AG04449 (cell line): ENCODE measurements at regions of chr3 and their contacts with region 1.

Region 1: GRCh38 chr3:141441381-141442364 is 45.2 kb upstream of the RASA2 start:
- DNase-seq: peak; percentile 73
- H3K4me3 ChIP-seq: no peak overlapping the region
- CTCF ChIP-seq: peak; percentile 70

Region 2: DNA sequence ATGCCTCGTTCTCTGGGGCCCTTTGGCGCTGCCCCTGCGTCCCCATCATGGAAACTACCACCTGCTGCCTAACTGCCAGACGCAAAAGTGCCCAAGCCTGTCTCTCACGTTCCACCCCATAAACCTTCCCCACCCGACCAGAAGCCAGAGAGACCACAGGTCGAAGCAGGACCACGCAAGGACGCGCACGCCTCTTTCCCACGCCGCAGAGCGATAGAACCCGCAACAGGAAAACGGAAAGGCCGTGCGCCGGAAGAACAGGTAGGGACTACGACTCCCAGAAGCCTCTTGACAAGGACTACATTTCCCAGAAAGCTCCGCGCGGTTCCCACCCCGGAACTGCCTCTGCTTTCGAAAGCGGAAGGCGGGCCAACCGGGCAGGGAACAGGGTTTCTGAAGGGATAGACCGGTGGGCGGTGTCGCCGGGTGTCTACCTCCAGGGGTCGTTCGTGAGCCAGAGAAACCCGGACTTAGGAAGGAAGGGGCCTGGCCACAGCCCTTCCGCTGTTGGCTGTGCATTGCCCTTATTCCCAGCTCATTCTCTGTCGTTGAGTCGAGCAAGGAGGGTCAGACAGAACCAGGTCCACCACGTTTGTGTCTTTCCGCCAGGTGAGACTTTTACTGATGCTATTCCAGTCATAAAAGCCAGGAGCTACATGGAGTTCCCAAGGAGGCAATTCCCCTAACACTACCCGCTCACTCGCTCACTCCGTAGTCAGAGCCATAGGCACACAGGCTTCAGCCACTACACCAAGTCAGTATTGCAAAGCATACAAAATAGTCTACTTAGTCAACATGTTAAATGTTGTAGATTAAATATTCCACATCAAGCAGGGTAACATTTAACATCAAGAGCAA is 129.9 kb before region 1 on chr3:
- CTCF ChIA-PET with region 1: interaction called, 40 read pairs
- POLR2A ChIA-PET with region 1: interaction called, 3 read pairs
- DNase-seq: peak; percentile 88
- H3K4me3 ChIP-seq: peak overlapping the region; percentile 96
- CTCF ChIP-seq: peak; percentile 89

Region 3: DNA sequence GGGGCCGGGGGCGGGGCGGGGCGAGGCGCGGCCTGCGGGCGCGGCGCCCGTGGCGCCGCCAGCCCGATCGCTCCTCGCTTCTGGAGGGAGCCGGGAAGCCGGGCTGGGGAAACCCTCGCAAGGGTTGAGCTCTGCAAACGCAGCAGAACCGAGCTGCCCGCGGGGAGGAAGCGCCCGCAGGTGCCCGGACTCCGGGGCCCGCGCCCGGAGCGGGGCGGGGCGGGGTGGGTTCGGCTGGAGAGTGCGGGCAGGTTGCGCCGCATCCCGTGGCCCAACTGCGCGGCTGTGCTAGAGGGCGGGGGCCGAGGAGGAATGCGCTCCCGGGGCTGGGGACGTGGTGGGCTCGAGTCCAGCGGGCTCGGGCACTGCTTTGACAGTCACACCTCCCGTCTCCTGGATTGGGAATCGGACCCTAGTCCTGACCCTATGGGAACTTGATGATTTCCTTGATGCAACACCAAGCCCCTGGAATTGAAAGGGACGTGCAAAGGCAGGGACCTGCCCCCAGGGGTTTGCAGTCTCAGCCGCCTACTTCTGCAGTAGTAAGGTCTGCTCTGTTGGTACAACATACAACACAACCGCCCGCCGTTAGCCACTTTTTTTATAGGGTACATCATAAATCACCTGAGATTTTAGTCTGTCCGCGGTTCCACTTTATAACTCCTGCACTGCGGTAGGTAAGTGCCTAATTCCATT is 39.0 kb before region 1 on chr3:
- CTCF ChIA-PET with region 1: interaction called, 15 read pairs
- POLR2A ChIA-PET with region 1: no interaction called
- DNase-seq: no peak
- H3K4me3 ChIP-seq: peak overlapping the region; percentile 62
- CTCF ChIP-seq: no peak

Region 4: DNA sequence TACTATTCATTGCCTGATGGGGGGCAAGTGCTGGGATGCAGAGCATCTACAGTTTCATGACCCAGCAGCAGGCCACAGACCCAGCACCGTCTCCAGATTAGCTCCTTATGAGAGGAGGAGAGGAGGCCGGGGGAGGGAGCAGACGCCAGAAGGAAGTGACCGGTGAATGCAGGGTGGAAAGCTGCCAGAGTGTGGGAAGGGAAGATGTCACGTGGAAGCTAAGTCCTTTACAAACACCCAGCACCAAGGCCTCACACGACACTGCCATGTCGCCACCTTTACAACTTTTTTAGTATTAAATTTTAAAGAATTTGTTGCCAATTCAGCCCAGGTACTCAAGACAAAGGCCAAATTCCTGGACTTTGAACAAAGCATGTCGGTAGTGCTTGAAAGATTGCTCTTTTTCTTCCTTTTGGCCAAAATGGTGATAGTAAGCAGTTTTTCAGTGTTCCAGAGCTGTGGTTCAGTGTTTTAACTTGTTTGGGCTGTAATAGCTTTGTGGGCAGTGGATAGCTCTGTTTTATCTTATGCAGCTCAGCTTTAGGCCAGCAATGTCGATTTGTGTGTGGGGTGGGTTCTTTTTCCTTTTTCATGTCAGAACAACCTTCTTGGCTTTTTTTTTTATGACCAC is 15.2 kb before region 1 on chr3:
- CTCF ChIA-PET with region 1: interaction called, 161 read pairs
- POLR2A ChIA-PET with region 1: interaction called, 3 read pairs
- DNase-seq: no peak
- H3K4me3 ChIP-seq: no peak overlapping the region
- CTCF ChIP-seq: no peak

Region 5: GRCh38 chr3:141485641-141486495 is 44.2 kb after region 1 on chr3:
- CTCF ChIA-PET with region 1: no interaction called
- POLR2A ChIA-PET with region 1: no interaction called
- DNase-seq: no peak
- H3K4me3 ChIP-seq: peak overlapping the region; percentile 60
- CTCF ChIP-seq: no peak